Activated CD8-positive, alpha-beta T cell treated with anti-CD3 and anti-CD28 coated beads, Interleukin-2, amount 10 ng/mL, durations not matched to agents 7 days and 5 days (primary cell): ENCODE measurements at regions of chr14 and their contacts with region 1.

Region 1: GRCh38 chr14:100192672-100193416 is 33.4 kb upstream of the DEGS2 start:
- DNase-seq: peak; percentile 100
- ATAC-seq: peak; percentile 100
- H3K4me3 Mint-ChIP-seq: peak overlapping the region; percentile 52
- H3K27ac Mint-ChIP-seq: peak overlapping the region; percentile 89
- H3K4me1 Mint-ChIP-seq: peaks cover 20% of the 10 kb centered on the region
- H3K27me3 Mint-ChIP-seq: no peaks in the 10 kb centered on the region

Region 2: GRCh38 chr14:99982537-99983250 is 210.2 kb before region 1 on chr14:
- CTCF ChIA-PET with region 1: interaction called, 51 read pairs
- POLR2A ChIA-PET with region 1: no interaction called
- DNase-seq: peak; percentile 78
- ATAC-seq: peak; percentile 87
- H3K4me3 Mint-ChIP-seq: no peak overlapping the region
- H3K27ac Mint-ChIP-seq: no peak overlapping the region
- H3K4me1 Mint-ChIP-seq: peaks cover 22% of the 10 kb centered on the region
- H3K27me3 Mint-ChIP-seq: no peaks in the 10 kb centered on the region

Region 3: GRCh38 chr14:100067971-100068959 is 124.6 kb before region 1 on chr14:
- CTCF ChIA-PET with region 1: interaction called, 47 read pairs
- POLR2A ChIA-PET with region 1: interaction called, 4 read pairs
- DNase-seq: peak; percentile 95
- ATAC-seq: peak; percentile 67
- H3K4me3 Mint-ChIP-seq: peak overlapping the region; percentile 91
- H3K27ac Mint-ChIP-seq: peak overlapping the region; percentile 97
- H3K4me1 Mint-ChIP-seq: peaks cover 36% of the 10 kb centered on the region
- H3K27me3 Mint-ChIP-seq: no peaks in the 10 kb centered on the region

Region 4: DNA sequence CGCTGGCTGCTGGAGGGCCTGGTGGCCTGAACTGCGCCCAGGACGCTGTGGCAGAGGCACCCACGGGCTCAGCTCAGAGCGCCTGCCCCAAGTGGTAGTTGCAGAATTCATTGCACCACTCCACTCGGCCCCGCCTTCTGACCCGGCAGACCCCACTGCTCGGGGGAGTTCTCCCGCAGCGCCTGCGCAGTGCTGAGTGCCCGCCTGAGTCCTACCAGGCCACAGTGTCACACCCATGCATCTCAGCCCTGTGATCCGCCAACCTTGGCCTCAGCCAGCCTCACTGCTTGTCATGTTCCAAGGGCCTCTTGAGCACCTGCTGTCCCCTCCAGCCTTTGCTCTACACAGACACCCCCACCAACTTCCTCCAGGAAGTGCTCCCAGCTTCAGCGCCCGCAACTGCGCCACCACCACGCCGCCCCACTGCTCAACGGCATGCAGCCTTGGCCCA is 45.6 kb before region 1 on chr14:
- CTCF ChIA-PET with region 1: interaction called, 12 read pairs
- POLR2A ChIA-PET with region 1: no interaction called
- DNase-seq: peak; percentile 81
- ATAC-seq: peak; percentile 62
- H3K4me3 Mint-ChIP-seq: peak overlapping the region; percentile 34
- H3K27ac Mint-ChIP-seq: peak overlapping the region; percentile 90
- H3K4me1 Mint-ChIP-seq: peaks cover 40% of the 10 kb centered on the region
- H3K27me3 Mint-ChIP-seq: no peaks in the 10 kb centered on the region

Region 5: DNA sequence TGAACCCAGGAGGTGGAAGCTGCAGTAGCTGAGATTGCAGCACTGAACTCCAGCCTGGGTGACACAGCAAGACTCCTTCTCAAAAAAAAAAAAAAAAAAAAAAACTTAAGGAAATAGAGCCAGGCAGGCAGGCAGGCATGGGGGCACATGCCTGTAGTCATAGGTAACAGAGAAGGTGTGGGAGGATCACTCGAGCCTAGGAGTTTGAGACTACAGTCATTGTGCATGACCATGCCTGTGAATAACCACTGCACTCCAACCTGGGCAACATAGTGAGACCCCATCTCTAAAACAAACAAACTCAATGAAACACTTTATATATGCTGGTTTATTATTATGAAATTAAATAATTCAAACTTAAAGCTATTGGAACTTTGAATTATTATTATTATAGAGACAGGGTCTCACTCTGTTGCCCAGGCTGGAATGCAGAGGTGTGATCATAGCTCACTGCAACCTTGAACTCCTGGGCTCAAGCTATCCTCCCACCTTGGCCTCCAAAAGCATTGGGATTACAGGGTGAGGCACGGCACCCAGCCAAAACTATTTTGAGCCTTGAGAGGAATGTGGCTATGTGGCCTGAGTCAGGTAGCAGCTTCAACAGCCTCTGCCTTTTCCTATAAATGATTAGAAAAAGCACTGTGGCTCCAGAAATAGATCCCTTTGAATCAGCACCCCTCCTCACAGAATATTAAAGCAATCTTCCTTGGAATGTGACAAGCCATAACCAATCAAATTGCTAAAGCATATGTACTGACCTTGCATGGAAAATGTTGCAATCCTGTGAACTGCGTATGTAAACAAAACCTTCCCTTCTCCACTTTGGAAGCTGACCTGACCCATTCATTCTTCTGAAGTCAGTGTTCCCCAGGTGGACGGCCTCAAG is 11.3 kb after region 1 on chr14:
- CTCF ChIA-PET with region 1: interaction called, 46 read pairs
- POLR2A ChIA-PET with region 1: no interaction called
- DNase-seq: no peak
- ATAC-seq: no peak
- H3K4me3 Mint-ChIP-seq: no peak overlapping the region
- H3K27ac Mint-ChIP-seq: no peak overlapping the region
- H3K4me1 Mint-ChIP-seq: no peaks in the 10 kb centered on the region
- H3K27me3 Mint-ChIP-seq: peaks cover 2% of the 10 kb centered on the region

Region 6: DNA sequence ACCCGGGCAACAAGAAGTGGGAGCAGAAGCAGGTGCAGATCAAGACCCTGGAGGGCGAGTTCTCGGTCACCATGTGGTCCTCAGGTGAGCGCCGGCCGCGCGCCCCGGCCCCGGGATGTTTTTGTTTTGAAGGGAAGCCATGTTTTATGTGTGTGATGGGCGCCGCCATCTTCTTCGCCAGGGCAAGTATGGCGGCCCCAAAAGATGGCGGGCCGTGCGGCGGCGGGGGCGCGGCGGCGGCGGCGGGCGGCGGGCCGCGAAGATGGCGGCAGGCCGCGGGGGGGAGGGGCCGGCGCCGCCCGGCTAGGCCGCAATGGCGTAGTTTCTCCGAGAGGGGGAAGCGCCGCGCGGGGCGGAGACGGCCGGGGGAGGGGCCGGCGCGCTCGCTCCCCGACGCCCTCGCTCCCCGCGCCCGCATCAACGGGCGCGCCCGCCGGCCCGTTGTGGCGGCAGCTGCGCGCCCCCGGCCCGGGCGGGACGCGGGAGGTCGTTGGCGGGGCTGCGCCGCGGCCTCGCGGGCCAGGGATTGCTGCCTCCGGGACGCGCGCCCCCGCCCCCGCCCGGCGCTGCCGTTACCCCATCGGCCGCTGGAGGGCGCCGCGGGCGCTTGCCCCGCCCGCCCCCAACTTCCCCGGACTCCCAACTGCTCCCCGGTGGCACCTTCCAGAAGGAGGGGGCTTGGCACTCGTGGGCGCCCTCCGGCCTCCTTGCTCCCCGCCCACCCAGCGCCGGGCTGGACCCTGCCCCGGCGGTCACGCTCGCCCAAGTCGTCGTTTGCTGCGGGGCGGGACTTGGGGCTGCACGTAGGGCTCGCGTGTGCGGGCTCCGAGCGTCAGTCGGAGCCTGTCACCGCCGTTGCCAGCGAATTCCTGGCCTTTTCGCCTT is 47.2 kb after region 1 on chr14:
- CTCF ChIA-PET with region 1: interaction called, 38 read pairs
- POLR2A ChIA-PET with region 1: interaction called, 3 read pairs
- DNase-seq: peak; percentile 85
- ATAC-seq: peak; percentile 43
- H3K4me3 Mint-ChIP-seq: peak overlapping the region; percentile 93
- H3K27ac Mint-ChIP-seq: peak overlapping the region; percentile 89
- H3K4me1 Mint-ChIP-seq: peaks cover 48% of the 10 kb centered on the region
- H3K27me3 Mint-ChIP-seq: no peaks in the 10 kb centered on the region

Region 7: DNA sequence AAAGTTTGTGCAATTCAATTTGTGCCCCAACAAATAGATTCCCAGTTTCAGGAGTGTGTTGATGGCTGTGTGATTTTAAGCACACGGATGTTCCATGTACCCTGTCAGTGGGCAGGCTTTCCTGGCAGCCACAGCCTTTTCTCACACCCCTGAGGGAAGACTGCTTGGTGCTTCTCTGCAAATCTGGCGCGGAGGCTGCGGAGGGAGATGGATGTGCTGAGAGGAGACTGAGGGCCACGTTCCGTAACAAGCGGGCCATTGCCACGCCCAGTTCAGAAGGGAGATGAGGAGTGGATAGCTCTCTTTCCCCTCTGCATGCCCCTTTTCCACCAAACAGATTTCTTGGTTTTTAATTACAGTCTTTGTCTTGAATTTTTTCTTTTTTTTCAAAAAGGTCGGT is 305.2 kb after region 1 on chr14:
- CTCF ChIA-PET with region 1: no interaction called
- POLR2A ChIA-PET with region 1: no interaction called
- DNase-seq: no peak
- ATAC-seq: no peak
- H3K4me3 Mint-ChIP-seq: no peak overlapping the region
- H3K27ac Mint-ChIP-seq: no peak overlapping the region
- H3K4me1 Mint-ChIP-seq: peaks cover 17% of the 10 kb centered on the region
- H3K27me3 Mint-ChIP-seq: no peaks in the 10 kb centered on the region